GM10248 (cell line): ENCODE measurements at regions of chr5 and their contacts with region 1.

Region 1: DNA sequence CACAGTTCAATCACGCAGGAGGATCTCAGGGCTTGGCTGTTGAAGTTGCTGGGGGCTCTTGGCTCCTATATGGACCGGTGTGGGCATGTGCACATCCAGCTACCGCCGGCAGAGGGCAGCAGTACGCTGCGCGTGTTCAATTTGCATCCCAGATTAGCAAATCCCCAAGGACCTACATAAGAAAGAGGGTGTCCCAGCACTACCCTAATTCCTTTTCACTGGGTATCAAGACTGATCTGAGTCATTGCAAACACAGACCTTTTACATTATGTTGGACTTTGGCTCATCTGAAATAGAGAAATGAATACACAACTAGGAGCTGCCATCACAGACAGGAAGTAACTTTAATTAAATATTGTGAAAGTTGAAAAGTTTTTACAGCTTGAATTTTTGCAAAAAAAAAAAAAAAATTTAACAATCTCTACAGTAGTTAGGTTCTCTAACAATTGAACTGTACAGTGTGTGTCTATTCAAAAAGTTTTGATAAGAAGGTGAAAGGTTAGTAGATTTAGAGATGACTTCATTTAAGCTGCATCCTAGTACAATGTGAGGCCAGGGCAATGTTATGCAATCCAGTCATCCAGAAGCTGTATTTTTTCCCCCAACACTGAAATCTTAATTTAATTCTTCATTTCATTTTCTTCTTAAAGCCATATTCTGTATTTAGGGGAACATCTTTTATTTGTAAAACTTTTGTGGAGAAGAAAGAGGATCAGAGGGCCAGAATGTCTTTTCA is 404.0 kb downstream of the EBF1 start:
- DNase-seq: peak; percentile 72
- CTCF ChIP-seq: peak; percentile 97

Region 2: GRCh38 chr5:158170060-158170459 is 525.7 kb before region 1 on chr5:
- CTCF ChIA-PET with region 1: interaction called, 26 read pairs
- POLR2A ChIA-PET with region 1: no interaction called
- DNase-seq: no peak
- CTCF ChIP-seq: no peak

Region 3: GRCh38 chr5:158658446-158659230 is 37.1 kb before region 1 on chr5:
- CTCF ChIA-PET with region 1: interaction called, 12 read pairs
- POLR2A ChIA-PET with region 1: no interaction called
- DNase-seq: no peak
- CTCF ChIP-seq: no peak

Region 4: DNA sequence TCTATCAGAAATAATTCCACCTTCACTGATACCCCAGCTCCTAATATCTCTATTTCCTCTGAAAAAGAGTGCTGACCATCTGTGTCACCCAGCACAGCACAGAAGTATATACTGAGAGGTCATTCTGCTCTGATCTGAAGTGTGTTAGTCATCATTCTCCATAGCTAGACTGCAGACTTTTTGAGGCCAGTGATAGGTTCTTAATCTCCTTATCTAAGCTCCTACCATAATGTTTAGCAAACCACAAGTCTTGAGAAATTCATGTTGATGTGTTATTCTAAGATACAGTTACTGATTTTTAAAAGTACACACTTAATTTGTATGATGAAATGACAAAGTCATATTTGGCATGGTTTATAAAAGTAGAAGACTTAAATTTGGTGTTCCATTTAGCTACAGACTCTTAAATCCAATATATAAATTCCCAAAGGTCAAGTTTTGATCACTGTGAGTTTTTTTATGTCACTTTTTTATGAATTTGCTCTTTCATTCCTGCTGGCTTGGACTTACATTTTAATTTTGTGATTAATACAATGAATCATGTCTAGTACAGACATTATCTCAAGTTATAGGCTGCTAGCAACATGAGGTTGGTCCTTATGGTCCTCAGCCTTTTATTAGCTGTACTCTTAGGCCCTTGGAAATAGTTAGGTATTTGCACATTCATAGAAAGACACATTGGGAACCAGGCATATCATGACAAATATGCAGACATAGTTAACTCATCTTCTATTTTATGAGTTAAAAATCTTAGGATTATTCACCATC is 23.2 kb after region 1 on chr5:
- CTCF ChIA-PET with region 1: interaction called, 11 read pairs
- POLR2A ChIA-PET with region 1: no interaction called
- DNase-seq: no peak
- CTCF ChIP-seq: no peak

Region 5: DNA sequence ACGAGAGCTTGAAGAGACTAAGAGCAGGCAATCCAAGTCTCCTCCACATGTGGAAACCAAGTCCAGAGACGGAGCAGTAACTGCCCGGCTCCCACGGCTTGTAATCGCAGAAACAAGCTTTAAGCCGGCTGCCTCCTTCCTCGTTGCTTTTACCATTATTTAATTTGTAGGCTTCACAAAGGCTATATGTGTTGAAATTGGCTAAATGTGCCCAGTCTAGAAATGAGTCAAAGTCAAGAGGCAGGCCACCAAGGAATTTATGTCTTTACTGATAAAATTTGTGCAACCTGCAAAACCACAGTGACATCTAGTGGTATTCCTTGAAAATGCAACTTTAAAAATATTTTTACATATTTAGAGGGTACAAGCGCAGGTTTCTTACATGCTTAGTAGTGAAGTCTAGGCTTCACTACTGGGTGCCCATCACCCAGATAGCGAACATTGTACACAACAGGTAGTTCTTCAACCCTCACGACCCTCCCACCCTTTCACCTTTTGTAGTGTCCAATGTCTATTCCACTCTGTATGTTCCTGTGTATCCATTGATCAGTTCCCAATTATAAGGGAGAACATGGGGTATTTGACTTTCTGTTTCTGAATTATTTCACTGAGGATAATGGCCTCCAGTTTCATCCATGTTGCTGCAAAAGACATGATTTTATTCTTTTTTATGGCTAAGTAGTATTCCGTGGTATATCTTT is 437.4 kb after region 1 on chr5:
- CTCF ChIA-PET with region 1: interaction called, 21 read pairs
- POLR2A ChIA-PET with region 1: no interaction called
- DNase-seq: peak; percentile 41
- CTCF ChIP-seq: peak; percentile 60